Caco-2 (cell line): ENCODE measurements at regions of chr4 and their contacts with region 1.

Region 1: DNA sequence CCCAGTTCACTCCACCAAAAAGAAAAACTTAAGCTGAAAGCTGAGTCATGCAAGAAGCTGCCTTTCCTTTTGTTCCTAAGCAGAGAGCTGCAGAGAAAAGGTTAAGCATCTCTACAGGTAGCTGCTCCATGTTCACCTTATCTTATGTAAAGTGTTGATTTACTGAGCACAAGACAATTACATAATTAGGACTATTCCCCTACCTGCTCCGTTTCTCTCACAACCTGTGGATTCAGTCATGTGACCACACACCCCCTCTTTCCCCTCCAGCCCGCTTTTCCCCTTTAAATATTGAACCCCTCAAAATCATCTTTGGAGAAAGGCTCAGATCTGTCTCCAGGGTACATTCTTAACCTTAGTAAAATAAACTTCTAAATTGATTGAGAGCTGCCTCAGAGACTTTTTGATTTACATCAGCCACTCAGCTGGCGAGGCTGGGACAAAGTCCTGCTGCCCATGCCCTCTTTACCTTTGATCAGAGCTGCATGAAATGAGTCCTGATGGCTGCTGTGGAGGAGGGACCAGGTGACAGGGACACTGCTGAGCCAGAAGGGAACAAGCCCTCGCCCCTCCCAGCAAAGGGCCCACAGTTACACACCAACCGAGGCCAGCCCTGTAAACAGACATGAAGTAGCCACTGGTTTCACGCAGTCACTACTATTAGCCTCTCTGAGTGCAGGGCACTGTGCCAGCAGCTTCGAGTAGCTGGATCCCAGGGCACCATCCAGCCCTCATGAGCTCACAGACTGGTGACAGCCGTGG is 53.9 kb upstream of the C4orf50 start:
- DNase-seq: no peak
- H3K4me3 ChIP-seq: no peak overlapping the region
- H3K4me3 Mint-ChIP-seq: no peak overlapping the region
- H3K27ac Mint-ChIP-seq: no peak overlapping the region
- H3K4me1 ChIP-seq: no peaks in the 10 kb centered on the region
- H3K4me1 Mint-ChIP-seq: no peaks in the 10 kb centered on the region
- H3K27me3 ChIP-seq: no peaks in the 10 kb centered on the region
- H3K27me3 Mint-ChIP-seq: peaks cover 12% of the 10 kb centered on the region
- CTCF ChIP-seq: no peak

Region 2: DNA sequence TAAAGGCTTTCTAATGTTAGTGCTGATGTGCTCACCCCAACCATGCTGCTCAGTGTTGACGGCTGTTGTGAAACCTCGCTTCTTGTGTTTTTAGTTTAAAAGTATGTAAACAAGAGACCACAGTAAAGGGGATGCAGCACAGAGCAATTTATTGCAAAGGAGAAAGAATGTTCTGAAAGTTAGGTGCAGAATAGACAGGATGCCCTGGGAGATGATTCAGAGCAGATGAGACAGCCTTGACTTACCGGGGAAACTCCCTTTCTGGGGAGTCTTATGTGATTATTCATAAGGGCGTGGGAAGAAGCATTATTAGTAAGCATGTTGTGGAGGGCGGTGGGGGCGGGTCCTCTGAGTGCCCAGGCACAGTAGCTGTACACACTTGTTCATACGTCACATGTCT is 313.4 kb before region 1 on chr4:
- CTCF ChIA-PET with region 1: no interaction called
- POLR2A ChIA-PET with region 1: no interaction called
- intact Hi-C with region 1: no loop called
- DNase-seq: no peak
- H3K4me3 ChIP-seq: no peak overlapping the region
- H3K4me3 Mint-ChIP-seq: no peak overlapping the region
- H3K27ac Mint-ChIP-seq: no peak overlapping the region
- H3K4me1 ChIP-seq: no peaks in the 10 kb centered on the region
- H3K4me1 Mint-ChIP-seq: no peaks in the 10 kb centered on the region
- H3K27me3 ChIP-seq: no peaks in the 10 kb centered on the region
- H3K27me3 Mint-ChIP-seq: no peaks in the 10 kb centered on the region
- CTCF ChIP-seq: no peak

Region 3: DNA sequence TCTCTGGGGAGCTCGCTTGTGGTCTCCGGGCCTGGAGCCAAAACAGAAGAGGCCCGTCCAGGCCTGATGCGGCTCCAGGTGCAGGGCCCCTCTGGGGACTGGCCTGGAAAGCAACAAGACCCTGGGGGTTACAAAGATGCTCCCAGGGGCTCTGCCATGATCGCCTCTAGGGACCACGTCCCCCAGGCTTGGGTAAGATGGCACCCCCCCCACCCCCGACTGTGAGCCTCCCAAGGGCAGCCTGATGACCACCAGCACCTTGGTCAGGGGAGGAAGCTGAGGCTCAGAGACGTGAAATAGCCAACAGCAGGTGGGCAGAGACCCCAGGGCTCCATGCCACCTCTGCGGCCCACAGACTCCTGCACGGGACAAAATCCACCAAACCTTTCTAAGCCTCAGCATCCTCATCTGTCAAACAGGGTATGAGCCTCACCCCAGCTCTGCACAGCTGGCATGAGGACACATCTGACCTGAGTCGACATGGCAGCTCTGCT is 79.3 kb before region 1 on chr4:
- CTCF ChIA-PET with region 1: interaction called, 10 read pairs
- POLR2A ChIA-PET with region 1: no interaction called
- intact Hi-C with region 1: no loop called
- DNase-seq: peak in 1 of 2 experiments; percentile 14
- H3K4me3 ChIP-seq: no peak overlapping the region
- H3K4me3 Mint-ChIP-seq: no peak overlapping the region
- H3K27ac Mint-ChIP-seq: no peak overlapping the region
- H3K4me1 ChIP-seq: no peaks in the 10 kb centered on the region
- H3K4me1 Mint-ChIP-seq: no peaks in the 10 kb centered on the region
- H3K27me3 ChIP-seq: no peaks in the 10 kb centered on the region
- H3K27me3 Mint-ChIP-seq: peaks cover 13% of the 10 kb centered on the region
- CTCF ChIP-seq: no peak